ENCODE measurements at regions of chr11 and their contacts with region 1.

Region 1: DNA sequence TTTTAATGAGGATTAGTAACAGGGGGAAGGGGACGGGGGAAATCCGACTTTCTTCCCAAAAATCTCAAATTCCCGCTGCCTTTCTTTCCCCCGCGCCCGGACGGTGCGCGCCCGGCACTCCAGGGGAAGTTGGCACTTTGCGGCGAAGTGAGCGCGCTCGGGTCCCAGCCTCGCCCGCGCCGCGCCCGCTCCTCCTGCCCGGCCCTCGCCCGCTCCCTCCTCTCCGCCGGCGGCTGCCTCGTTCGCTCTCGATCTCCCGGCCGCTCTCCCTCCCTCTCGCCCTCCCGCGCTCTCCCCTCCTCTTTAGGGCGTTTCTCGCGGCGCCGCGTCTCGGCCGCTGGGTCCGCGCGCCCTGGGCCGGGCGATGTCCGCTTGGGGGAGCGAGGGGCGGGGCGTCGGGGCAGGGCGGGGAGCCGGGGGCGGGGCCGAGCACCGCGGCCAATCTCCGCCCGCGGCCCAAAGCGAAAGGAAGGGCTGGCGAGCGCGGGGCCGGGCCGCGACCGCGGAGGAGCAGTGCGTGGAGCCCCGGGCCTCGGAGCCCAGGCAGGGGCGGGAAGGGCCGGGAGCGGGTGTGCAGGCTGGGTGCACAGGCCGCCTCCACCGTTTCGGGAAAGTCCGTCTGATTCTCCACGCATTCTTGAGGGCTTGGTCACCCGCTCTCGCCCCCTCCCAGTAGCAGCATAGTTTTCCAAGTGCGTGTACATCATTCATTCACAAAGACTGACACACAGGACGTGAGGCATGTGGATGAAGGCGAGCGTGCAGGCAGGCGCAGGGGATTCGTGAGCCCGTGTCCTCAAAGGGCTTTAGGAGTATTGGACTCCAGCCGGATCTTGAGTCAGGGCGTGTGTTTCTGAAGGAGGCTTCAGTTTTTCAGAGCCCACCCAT is 65.1 kb downstream of the ETS1 start:
- DNase-seq: peak; percentile 91
- H3K4me3 Mint-ChIP-seq: peak overlapping the region; percentile 96
- H3K27ac Mint-ChIP-seq: peak overlapping the region; percentile 98
- H3K4me1 Mint-ChIP-seq: peaks cover 65% of the 10 kb centered on the region
- H3K27me3 Mint-ChIP-seq: no peaks in the 10 kb centered on the region

Region 2: DNA sequence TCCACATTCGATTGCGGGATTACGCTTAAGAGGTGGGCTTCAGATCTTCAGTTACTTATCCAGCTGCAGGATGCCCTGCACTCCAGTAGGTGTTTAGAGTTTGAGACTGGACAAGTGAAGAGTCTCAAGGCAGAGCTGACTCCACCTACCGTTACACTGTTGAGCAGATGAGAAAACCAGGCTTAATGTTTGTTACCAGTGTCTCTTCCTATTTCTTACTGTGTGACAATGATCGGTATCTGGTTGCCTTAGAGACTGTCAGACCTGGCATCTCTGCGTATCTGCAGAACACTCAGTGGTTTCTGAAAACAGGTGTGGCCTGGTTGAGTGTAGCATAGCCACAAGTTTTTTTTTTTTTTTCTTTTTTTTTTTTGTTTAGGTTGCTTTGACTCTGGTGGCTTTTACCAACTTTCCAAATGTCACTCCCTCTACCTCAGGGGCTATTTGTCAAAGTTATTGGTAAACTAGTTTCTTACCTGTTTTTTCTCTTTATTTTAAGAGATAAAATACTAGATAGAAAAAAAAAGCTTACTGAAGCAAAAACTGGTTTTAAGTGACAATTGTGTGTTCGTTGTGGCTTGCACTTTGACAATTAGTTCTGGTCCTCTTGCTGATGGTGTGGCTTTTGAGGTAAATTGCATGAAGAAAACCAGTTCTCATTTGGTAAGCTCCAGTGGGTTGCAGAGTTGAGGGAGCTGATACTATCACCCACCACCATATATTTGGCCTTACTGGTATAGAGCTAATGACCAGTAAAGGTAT is 219.7 kb before region 1 on chr11:
- intact Hi-C with region 1: loop called (anchors 1 kb)
- DNase-seq: peak; percentile 79
- H3K4me3 Mint-ChIP-seq: peak overlapping the region; percentile 91
- H3K27ac Mint-ChIP-seq: peak overlapping the region; percentile 97
- H3K4me1 Mint-ChIP-seq: peaks cover 85% of the 10 kb centered on the region
- H3K27me3 Mint-ChIP-seq: no peaks in the 10 kb centered on the region

Region 3: DNA sequence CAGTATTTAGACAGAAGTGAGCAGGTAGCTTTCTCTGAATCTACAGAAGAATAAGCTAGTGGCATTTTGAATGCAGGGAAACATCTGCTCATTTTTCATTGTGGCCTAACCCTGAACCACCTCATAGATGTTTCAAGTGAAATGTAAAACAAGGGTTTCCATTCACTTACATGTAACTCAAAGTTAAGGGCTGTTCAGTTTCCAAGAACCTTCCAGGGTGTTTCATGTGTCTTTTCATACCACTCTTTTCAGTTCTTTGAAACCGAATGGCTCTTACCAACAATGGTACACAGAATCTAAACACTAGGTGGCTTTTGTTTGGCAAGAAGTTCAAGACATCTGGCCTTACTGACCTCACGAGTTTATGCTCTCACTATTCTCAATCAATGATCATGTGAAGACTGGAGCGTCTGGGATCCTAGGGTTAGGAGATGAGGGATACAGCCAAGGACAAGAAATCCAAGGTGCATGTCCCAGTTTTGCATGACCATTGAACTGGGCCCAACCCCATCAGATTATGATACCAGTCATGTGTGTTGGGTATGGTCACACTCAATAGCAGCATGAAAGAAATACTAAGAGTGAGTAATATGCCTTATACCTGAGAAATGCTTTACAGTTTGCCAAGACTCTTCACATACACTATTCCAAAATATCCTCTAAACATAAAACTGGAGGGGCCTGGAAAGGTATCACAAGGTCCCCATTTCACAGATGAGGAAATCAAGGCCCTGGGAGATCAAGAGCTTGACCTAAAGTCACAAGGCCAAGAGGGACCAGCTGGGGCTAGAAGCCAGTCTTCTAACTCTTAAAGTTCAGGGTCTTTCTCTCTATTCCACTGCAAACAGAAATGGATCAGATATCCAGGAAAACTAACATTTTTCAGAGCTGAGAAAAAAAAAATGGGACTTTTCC is 27.6 kb before region 1 on chr11:
- intact Hi-C with region 1: loop called (anchors 1 kb)
- DNase-seq: no peak
- H3K4me3 Mint-ChIP-seq: peak overlapping the region; percentile 74
- H3K27ac Mint-ChIP-seq: peak overlapping the region; percentile 98
- H3K4me1 Mint-ChIP-seq: peaks cover 98% of the 10 kb centered on the region
- H3K27me3 Mint-ChIP-seq: no peaks in the 10 kb centered on the region

Region 4: DNA sequence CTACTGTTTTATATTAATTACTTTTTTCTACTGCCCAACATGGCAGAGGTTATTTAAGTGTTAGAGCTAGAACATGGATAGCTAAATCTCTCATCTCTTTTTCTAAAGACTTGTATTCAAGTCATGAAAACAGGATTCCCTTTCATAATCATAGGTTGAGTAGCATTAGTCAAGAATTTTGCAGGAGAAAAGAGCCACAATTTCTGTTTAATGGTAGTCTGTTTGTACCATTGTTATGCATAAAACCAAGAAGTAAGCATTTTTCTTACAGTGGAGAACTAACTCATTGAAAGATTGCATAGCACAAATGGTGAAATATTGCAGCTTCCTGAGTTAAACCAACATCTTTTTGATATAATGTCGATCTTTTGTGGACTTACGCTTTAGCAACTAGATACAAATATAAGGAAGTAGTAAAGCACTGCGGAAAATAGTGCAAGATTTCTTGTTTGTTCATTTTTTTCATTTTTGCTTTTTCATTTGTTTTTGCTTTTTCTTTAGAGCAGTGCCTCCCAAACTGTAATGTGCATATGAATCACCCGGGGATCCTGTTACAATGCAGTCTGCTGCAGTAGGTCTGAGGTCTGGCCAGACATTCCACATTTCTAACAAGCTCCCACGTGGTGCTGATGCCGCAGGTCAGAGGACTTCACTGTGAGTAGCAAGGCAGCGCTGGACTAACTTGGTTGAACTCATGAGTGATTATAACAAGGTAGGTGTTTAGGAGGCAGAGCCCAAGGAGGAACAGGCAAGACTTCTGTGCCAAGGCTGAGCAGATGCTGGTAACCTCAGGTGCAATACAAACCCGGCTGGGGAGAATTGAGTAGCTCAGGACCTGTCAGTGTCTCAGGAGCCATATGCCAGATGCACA is 60.4 kb after region 1 on chr11:
- intact Hi-C with region 1: loop called (anchors 1 kb)
- DNase-seq: no peak
- H3K4me3 Mint-ChIP-seq: no peak overlapping the region
- H3K27ac Mint-ChIP-seq: peak overlapping the region; percentile 80
- H3K4me1 Mint-ChIP-seq: peaks cover 51% of the 10 kb centered on the region
- H3K27me3 Mint-ChIP-seq: peaks cover 6% of the 10 kb centered on the region

Region 5: GRCh38 chr11:128831174-128832120 is 309.1 kb after region 1 on chr11:
- intact Hi-C with region 1: loop called (anchors 2 kb)
- DNase-seq: peak; percentile 75
- H3K4me3 Mint-ChIP-seq: peak overlapping the region; percentile 68
- H3K27ac Mint-ChIP-seq: peak overlapping the region; percentile 90
- H3K4me1 Mint-ChIP-seq: peaks cover 31% of the 10 kb centered on the region
- H3K27me3 Mint-ChIP-seq: peaks cover 9% of the 10 kb centered on the region

Measured in activated T-helper 1 cell treated with anti-CD3 and anti-CD28 coated beads, Interleukin-12 subunit alpha, Interleukin-12 subunit beta, Interleukin-2, Interleukin-4 antibody, amounts not matched to agents 30 ng/mL and 10 ng/mL and 1 ng/mL, durations not matched to agents 14 hours and 24 hours and 36 hours (primary cell).